Natural killer cell (primary cell): ENCODE measurements at regions of chr21 and their contacts with region 1.

Region 1: GRCh38 chr21:29265690-29266479 is 32.8 kb upstream of the BACH1 start:
- DNase-seq: peak in 1 of 2 donors; percentile 6
- ATAC-seq: no peak
- H3K4me3 ChIP-seq: no peak overlapping the region
- H3K4me3 Mint-ChIP-seq: no peak overlapping the region
- H3K27ac ChIP-seq: no peak overlapping the region
- H3K27ac Mint-ChIP-seq: no peak overlapping the region
- H3K4me1 ChIP-seq: no peaks in the 10 kb centered on the region
- H3K4me1 Mint-ChIP-seq: no peaks in the 10 kb centered on the region
- H3K27me3 ChIP-seq: no peaks in the 10 kb centered on the region
- H3K27me3 Mint-ChIP-seq: peaks cover 6 to 14% of the 10 kb centered on the region in 2 donors
- CTCF ChIP-seq: no peak

Region 2: DNA sequence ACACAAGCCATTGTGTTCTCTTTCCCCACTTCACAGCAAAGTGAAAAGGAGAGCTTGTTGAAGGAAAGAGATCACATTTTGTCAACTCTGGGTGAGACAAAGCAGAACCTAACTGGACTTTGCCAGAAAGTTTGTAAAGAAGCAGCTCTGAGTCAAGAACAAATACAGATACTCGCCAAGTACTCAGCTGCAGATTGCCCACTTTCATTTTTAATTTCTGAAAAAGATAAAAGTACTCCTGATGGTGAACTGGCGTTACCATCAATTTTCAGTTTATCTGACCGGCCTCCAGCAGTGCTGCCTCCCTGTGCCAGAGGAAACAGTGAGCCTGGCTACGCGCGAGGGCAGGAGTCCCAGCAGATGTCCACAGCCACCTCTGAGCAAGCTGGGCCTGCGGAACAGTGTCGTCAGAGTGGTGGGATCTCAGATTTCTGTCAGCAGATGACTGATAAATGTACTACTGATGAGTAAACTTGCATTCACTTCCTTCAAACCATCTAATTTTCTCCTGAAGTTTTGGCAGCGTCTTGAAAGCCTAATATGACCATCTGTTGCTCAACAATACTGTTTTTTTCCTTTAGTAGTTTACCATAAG is 76.6 kb after region 1 on chr21:
- intact Hi-C with region 1: loop called (anchors 10 kb)
- DNase-seq: no peak
- ATAC-seq: no peak
- H3K4me3 ChIP-seq: no peak overlapping the region
- H3K4me3 Mint-ChIP-seq: no peak overlapping the region
- H3K27ac ChIP-seq: no peak overlapping the region
- H3K27ac Mint-ChIP-seq: no peak overlapping the region
- H3K4me1 ChIP-seq: no peaks in the 10 kb centered on the region
- H3K4me1 Mint-ChIP-seq: peaks cover 5 to 15% of the 10 kb centered on the region in 2 donors
- H3K27me3 ChIP-seq: no peaks in the 10 kb centered on the region
- H3K27me3 Mint-ChIP-seq: no peaks in the 10 kb centered on the region
- CTCF ChIP-seq: no peak